SK-N-SH (cell line): ENCODE measurements at regions of chr19 and their contacts with region 1.

Region 1: DNA sequence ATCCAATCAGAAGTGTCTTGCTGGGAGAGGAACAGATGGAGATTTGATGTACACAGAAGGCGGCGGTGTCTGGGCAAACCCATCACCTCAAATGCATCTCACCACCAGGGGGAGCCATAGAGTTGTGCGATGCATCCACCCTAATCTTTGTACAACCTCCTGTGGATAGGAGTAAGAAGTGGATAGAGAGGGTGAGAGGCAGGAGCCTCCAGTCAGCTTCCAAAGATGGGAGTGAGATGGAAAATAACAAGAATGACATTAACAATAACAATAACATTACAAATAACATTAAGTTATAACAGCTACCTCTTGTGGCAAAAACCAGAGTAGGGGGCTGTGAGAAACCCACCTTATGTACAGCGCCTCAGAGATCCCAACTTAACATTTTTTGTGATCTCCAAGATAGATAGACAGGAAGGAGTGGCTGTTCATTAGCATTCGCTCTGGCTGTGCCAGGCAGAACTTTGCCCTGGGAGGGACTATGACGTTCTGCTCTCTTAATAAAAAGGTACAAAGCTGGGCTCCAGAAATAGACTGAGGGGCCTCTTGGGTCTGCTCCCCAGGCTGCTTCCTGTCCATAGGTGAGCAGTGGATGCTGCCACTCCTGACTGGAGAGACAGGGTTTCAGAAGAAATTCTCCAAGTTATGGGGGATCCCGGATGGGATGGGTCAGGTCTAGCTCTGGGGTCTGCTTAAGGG is 5.2 kb upstream of the CEACAM18 start:
- DNase-seq: peak; percentile 69
- H3K4me3 ChIP-seq: no peak overlapping the region
- H3K27ac ChIP-seq: no peak overlapping the region
- H3K4me1 ChIP-seq: no peaks in the 10 kb centered on the region
- H3K27me3 ChIP-seq: peaks cover 20% of the 10 kb centered on the region; the same call in 1 of the 2 replicates
- CTCF ChIP-seq: peak; percentile 81
- EP300 ChIP-seq: no peak
- RAD21 ChIP-seq: peak; percentile 71

Region 2: DNA sequence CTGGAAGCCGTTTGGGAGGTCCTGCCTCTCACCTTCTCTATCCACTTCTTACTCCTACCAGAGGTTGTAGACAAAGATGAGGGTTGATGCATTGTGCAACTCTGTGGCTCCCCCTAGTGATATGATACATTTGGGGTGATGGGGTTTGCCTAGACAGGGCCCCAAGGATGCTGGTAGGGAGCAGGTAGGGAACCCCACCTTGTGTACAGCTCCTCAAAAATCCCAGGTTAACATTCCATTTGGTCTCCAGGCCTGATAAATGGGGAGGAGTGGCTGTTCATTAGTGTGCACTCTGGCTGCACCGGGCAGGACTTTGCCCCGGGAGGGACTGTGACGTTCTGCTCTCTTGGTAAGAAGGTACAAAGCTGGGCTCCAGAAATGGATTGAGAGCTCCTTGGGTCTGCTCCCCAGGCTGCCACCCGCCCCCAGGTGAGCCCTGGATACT is 34.1 kb before region 1 on chr19:
- CTCF ChIA-PET with region 1: interaction called, 12 read pairs
- POLR2A ChIA-PET with region 1: no interaction called
- DNase-seq: no peak
- H3K4me3 ChIP-seq: no peak overlapping the region
- H3K27ac ChIP-seq: no peak overlapping the region
- H3K4me1 ChIP-seq: no peaks in the 10 kb centered on the region
- H3K27me3 ChIP-seq: peaks cover 62% of the 10 kb centered on the region
- CTCF ChIP-seq: peak; percentile 45
- EP300 ChIP-seq: no peak
- RAD21 ChIP-seq: peak; percentile 56

Region 3: GRCh38 chr19:51448011-51448744 is 25.0 kb before region 1 on chr19:
- CTCF ChIA-PET with region 1: interaction called, 14 read pairs
- POLR2A ChIA-PET with region 1: no interaction called
- DNase-seq: no peak
- H3K4me3 ChIP-seq: no peak overlapping the region
- H3K27ac ChIP-seq: no peak overlapping the region
- H3K4me1 ChIP-seq: no peaks in the 10 kb centered on the region
- H3K27me3 ChIP-seq: peaks cover 58% of the 10 kb centered on the region; the same call in 1 of the 2 replicates
- CTCF ChIP-seq: no peak
- EP300 ChIP-seq: no peak
- RAD21 ChIP-seq: no peak

Region 4: DNA sequence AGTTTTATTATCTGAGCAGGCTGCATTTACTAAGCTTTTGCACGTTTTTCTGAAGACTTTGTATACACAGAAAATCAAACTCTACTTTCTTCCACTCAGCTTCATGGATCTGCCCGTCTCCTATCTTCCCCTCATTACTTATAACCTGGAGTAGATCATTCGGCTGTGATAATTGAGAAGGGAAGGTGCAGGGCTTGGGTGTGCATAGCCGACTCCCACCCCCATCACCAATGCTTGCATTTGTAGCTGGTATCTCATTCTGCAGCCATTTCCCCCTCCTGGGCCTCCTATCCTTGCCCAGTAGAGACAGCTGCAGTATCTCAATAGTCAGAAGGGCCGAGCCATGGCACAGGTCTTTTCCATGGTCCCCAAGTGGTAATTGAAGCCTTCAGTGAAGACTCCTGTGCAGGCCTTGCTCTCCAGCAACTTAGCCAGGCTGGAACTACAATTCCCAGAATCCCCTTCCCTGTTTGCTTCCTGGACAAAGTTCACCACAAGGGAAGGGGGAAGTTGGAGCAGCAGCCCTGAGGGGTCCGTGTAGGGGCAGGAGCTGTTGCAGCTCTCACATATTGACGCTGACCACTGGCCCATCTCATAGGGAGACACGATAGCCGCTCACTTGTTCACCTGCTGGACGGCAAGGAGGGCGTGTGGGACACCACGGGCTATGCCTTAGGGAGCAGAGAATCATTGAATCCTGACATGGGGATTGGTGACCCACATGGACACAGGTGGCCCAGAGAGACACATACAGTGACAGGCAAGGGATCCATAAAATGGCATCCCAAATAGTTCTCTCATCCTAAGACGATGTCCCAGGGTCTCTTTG is 12.8 kb before region 1 on chr19:
- CTCF ChIA-PET with region 1: interaction called, 37 read pairs
- POLR2A ChIA-PET with region 1: no interaction called
- DNase-seq: peak; percentile 58
- H3K4me3 ChIP-seq: peak overlapping the region in 1 of 2 experiments; percentile 36; a peak in 2 of 4 replicates
- H3K27ac ChIP-seq: no peak overlapping the region
- H3K4me1 ChIP-seq: no peaks in the 10 kb centered on the region; a peak in 1 of 4 replicates
- H3K27me3 ChIP-seq: peaks cover 38% of the 10 kb centered on the region
- CTCF ChIP-seq: no peak
- EP300 ChIP-seq: no peak
- RAD21 ChIP-seq: no peak

Region 5: GRCh38 chr19:51485960-51486660 is 13.0 kb after region 1 on chr19:
- CTCF ChIA-PET with region 1: interaction called, 46 read pairs
- POLR2A ChIA-PET with region 1: no interaction called
- DNase-seq: no peak
- H3K4me3 ChIP-seq: no peak overlapping the region
- H3K27ac ChIP-seq: no peak overlapping the region
- H3K4me1 ChIP-seq: no peaks in the 10 kb centered on the region
- H3K27me3 ChIP-seq: peaks cover 8% of the 10 kb centered on the region; the same call in 1 of the 2 replicates
- CTCF ChIP-seq: no peak
- EP300 ChIP-seq: no peak
- RAD21 ChIP-seq: no peak

Region 6: DNA sequence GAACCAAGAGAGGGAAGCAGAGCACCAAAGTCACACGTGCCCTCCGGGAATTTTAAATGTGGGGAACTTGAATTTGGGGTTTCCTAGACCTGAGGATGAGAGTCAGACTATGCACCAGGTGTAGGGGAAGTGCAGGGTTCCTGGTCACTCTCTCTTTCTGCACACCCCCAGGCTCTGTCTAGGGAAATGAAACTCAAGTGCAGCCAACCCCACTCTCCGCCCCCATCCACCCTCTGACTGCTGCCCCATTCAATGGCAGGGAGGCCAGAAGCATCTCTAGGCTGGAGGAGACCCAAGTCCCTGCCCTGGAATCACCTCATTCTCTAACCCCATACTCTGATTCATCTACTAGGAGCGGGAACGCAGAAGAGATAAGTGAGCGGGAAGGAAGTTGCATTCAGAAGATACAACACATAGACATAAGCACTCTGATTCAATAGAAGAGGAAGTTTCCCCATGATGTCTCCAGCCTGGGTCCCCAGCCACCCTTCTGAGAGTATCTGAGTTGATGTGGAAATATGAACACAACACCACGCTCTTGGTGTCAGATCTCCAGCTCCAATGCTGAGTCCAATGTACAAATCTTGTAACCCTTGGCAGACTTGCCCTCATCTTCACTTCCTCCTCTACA is 178.2 kb after region 1 on chr19:
- CTCF ChIA-PET with region 1: interaction called, 12 read pairs
- POLR2A ChIA-PET with region 1: no interaction called
- DNase-seq: no peak
- H3K4me3 ChIP-seq: no peak overlapping the region
- H3K27ac ChIP-seq: no peak overlapping the region
- H3K4me1 ChIP-seq: no peaks in the 10 kb centered on the region
- H3K27me3 ChIP-seq: peaks cover 40% of the 10 kb centered on the region; the same call in 1 of the 2 replicates
- CTCF ChIP-seq: no peak
- EP300 ChIP-seq: no peak
- RAD21 ChIP-seq: no peak

Region 7: DNA sequence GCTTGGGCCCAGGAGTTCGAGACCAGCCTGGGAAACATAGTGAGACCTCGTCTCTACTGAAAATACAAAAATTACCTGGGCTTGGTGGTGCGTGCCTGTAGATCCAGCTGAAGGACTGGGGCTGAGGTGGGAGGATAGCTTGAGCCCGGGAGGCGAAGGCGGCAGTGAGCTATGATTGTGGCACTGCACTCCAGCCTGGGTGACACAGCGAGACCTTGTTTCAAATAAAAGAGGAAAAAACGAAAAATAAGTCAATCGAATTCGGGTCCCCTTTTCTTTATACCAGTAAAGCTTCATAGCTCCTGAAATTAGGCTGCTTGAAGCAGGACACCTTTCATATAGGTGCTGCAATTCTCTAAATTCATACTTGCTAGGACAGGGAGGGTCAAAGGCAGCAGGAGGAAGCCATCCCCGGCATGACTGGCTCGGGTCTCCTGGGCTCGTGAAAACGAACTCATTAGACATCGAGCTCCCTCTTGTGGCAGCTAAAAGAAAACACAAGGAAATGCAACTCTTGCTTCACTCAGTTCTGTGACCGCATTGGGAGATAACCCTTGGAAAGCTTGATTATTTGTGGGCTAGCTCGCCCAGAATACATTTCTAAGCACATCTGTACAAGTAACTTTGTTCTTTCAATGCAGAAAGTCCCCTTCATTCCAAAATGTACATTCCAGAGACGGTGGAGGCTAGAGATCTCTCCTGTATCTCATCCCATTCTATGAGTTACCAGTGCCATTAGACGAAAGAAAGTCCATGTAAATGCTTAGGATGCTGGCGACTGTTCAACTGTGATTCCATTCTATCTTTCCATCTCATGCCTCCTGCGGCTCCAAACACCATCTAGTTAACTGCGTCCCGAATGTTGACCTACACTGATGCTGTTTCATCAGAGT is 304.7 kb after region 1 on chr19:
- CTCF ChIA-PET with region 1: interaction called, 25 read pairs
- POLR2A ChIA-PET with region 1: no interaction called
- DNase-seq: peak; percentile 66
- H3K4me3 ChIP-seq: peak overlapping the region in 1 of 2 experiments; percentile 10; a peak in 1 of 4 replicates
- H3K27ac ChIP-seq: no peak overlapping the region
- H3K4me1 ChIP-seq: no peaks in the 10 kb centered on the region
- H3K27me3 ChIP-seq: no peaks in the 10 kb centered on the region
- CTCF ChIP-seq: peak; percentile 81
- EP300 ChIP-seq: no peak
- RAD21 ChIP-seq: peak; percentile 78